ENCODE measurements at regions of chr22 and their contacts with region 1.

Region 1: DNA sequence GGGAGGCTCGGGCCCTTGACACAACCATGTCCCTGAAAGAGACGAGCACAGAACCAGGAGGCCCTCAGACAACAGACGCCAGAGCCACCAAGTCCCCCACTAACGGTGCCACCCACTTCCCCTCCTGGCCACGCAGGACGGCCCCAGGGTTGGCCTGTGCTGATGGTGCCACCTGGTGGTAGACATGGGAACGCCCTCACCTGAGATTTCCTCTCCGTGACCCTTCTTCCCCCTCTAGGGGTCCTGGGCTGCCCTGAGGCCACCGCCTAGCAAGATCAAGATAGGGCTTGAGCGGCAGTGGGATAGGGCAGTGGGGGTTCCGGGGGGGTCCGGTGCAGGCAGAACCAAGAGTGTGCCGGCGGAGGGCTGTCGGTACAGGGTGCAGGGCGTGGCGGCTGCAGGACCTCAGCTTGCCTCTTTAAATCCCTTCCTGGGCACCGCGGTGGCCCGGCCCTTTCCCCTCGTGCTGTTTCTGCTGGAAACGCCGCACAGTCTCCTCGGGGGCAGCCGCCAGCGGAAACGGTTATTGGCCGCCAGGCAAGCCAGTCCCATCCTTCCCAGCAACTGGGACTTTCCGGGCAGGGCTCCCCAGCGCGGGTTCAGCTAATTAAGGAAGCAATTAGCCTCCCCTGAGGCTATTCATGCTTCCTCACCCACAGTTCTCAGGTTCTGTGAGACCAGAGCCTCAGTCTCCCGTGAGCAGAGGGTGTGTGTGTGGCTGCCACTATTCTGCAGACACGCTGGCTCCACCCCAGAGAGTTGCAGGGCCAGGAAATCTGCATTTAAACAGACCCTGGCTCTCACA is 5.5 kb upstream of the NFAM1 start:
- DNase-seq: peak; percentile 76
- ATAC-seq: peak; percentile 88
- H3K4me3 Mint-ChIP-seq: peak overlapping the region; percentile 81
- H3K27ac Mint-ChIP-seq: peak overlapping the region; percentile 46
- H3K4me1 Mint-ChIP-seq: peaks cover 37% of the 10 kb centered on the region
- H3K27me3 Mint-ChIP-seq: peaks cover 25% of the 10 kb centered on the region
- CTCF ChIP-seq: peak; percentile 59

Region 2: GRCh38 chr22:41822317-41823060 is 615.2 kb before region 1 on chr22:
- CTCF ChIA-PET with region 1: no interaction called
- POLR2A ChIA-PET with region 1: no interaction called
- intact Hi-C with region 1: loop called (anchors 5 kb)
- DNase-seq: no peak
- ATAC-seq: peak; percentile 90
- H3K4me3 Mint-ChIP-seq: no peak overlapping the region
- H3K27ac Mint-ChIP-seq: peak overlapping the region; percentile 26
- H3K4me1 Mint-ChIP-seq: peaks cover 5% of the 10 kb centered on the region
- H3K27me3 Mint-ChIP-seq: no peaks in the 10 kb centered on the region
- CTCF ChIP-seq: no peak

Region 3: GRCh38 chr22:42169055-42169469 is 268.6 kb before region 1 on chr22:
- CTCF ChIA-PET with region 1: interaction called, 18 read pairs
- POLR2A ChIA-PET with region 1: interaction called, 4 read pairs
- intact Hi-C with region 1: loop called (anchors 1 kb)
- DNase-seq: peak; percentile 48
- ATAC-seq: peak; percentile 79
- H3K4me3 Mint-ChIP-seq: no peak overlapping the region
- H3K27ac Mint-ChIP-seq: no peak overlapping the region
- H3K4me1 Mint-ChIP-seq: peaks cover 34% of the 10 kb centered on the region
- H3K27me3 Mint-ChIP-seq: no peaks in the 10 kb centered on the region
- CTCF ChIP-seq: no peak

Region 4: DNA sequence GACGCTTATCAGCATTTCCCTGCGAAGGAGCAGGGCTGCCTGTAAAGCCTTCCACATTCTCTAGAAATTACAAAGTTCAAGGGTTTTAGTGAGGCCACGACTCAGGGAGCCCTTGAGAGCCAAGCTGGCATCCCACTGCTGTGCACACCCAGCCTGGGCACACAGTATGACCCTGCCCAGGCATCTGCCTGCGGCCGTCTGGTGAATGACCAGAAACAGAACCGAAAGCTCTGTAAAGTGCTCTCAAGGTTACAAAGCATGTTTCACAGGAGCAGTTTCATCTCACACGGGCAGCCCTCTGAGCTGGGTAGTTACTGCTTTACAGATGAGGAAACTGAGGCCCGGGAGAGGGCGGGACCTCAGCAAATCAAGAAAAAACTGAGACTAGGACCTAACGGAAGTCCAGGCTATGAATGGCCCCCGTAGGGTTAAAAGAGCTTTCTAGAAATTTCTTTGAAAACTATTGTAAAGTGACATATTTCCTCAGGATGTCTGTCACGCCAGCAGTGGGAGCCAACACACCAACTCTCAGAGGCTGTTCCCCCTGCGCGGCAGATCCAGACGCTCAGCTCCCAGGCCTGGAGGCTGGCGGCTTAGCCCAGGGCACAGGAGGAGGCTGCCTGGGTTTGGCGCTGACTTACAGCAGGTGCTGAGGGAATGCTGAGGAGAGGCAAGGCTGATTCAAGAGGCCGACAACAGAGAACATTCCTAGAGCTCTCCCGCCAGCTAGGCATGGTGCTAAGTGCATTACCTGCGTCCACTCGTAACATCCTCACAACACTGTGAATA is 159.5 kb before region 1 on chr22:
- CTCF ChIA-PET with region 1: interaction called, 25 read pairs
- POLR2A ChIA-PET with region 1: no interaction called
- intact Hi-C with region 1: loop called (anchors 2 kb)
- DNase-seq: no peak
- ATAC-seq: no peak
- H3K4me3 Mint-ChIP-seq: no peak overlapping the region
- H3K27ac Mint-ChIP-seq: no peak overlapping the region
- H3K4me1 Mint-ChIP-seq: peaks cover 5% of the 10 kb centered on the region
- H3K27me3 Mint-ChIP-seq: peaks cover 11% of the 10 kb centered on the region
- CTCF ChIP-seq: no peak

Region 5: DNA sequence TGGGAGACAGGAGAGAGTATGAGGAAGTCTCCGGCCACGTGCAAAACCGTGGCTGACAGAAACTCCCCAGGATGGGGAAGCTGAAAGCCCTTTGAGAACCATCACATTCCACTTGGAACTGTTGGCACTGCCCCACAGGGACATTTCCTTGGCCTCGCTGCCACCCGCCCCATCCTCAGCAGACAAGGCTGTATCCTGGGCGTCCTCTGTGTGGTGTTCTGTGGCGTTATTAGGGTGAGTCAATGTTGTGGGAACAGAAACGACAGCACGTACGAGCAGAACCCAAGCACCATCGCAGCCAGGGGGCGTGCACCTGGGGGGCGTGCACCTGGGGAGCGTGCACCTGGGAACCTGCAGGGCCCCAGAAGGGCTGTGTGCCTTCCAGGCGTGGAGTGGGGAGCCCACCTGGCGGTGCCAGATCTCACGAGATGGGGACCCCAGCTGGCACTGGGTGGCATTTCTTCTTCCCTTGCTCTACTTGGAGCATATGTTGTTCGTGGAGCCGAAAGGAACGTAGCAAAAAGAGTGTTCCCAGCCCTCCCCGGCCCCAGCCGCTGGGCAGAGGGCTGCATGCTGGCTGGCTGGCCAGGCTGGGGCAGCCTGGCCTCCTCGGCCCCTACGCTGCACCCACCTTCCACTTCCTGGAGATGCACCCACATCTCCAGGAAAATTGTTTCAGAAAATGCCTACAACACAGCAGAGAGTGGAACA is 40.9 kb before region 1 on chr22:
- CTCF ChIA-PET with region 1: no interaction called
- POLR2A ChIA-PET with region 1: interaction called, 3 read pairs
- intact Hi-C with region 1: loop called (anchors 2 kb)
- DNase-seq: peak; percentile 49
- ATAC-seq: peak; percentile 59
- H3K4me3 Mint-ChIP-seq: peak overlapping the region; percentile 75
- H3K27ac Mint-ChIP-seq: peak overlapping the region; percentile 90
- H3K4me1 Mint-ChIP-seq: peaks cover 51% of the 10 kb centered on the region
- H3K27me3 Mint-ChIP-seq: no peaks in the 10 kb centered on the region
- CTCF ChIP-seq: no peak

Region 6: GRCh38 chr22:42452456-42452855 is 14.8 kb after region 1 on chr22:
- CTCF ChIA-PET with region 1: no interaction called
- POLR2A ChIA-PET with region 1: no interaction called
- intact Hi-C with region 1: no loop called
- DNase-seq: no peak
- ATAC-seq: no peak
- H3K4me3 Mint-ChIP-seq: no peak overlapping the region
- H3K27ac Mint-ChIP-seq: no peak overlapping the region
- H3K4me1 Mint-ChIP-seq: peaks cover 2% of the 10 kb centered on the region
- H3K27me3 Mint-ChIP-seq: peaks cover 10% of the 10 kb centered on the region
- CTCF ChIP-seq: no peak

Measured in activated B cell treated with CpG ODN at 0.5 μM for 24 hours (primary cell).